Vagina (tissue), 2 donors: ENCODE measurements at regions of chr13 and their contacts with region 1.

Region 1: GRCh38 chr13:50081679-50082425 is 66.6 kb downstream of the KCNRG start:
- DNase-seq: peak; percentile 99
- H3K4me3 ChIP-seq: peak overlapping the region; percentile 45 to 58
- H3K27ac ChIP-seq: peak overlapping the region; percentile 87
- H3K4me1 ChIP-seq: peaks cover 44% of the 10 kb centered on the region
- H3K27me3 ChIP-seq: no peaks in the 10 kb centered on the region
- CTCF ChIP-seq: no peak
- POLR2A ChIP-seq: no peak

Region 2: DNA sequence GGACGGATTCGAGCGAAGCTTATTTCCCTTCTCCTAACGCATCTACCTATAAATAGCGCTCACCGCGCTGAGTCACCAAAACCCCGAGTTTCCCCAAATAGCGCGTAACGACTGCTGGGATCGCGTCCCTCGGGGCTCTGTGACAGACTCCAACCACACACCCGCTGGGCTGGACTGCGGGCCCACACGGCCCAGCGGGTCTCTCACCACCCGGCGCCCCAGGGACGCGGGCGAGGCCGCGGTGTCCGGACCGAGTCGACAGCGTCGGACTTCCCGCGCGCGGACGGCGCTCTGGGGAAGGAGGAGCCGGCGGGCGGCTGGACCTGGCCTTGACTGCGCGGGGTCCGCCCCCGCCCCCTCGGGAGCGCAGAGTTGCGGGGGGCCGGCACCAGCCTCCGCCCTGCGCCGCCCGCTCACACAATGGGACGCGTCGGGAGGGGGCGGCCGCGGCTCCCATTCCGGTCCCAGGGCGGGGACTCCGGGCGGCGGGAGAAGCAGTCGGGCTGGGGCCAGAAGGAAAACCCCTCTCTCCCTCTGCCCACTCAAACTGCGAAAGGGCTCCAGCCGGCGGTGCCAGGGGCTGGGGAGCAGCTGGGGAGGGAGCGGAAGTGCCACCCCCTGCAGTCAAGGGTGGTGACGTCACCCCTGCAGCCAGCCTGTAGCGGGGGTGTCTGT is 42.1 kb after region 1 on chr13:
- intact Hi-C with region 1: loop called (anchors 2 kb)
- DNase-seq: peak in 1 of 2 donors; percentile 98
- H3K4me3 ChIP-seq: peak overlapping the region; percentile 93 to 95
- H3K27ac ChIP-seq: peak overlapping the region; percentile 98
- H3K4me1 ChIP-seq: peaks cover 34% of the 10 kb centered on the region
- H3K27me3 ChIP-seq: no peaks in the 10 kb centered on the region
- CTCF ChIP-seq: no peak
- POLR2A ChIP-seq: peak; percentile 25 to 81

Region 3: GRCh38 chr13:50801087-50801931 is 719.5 kb after region 1 on chr13:
- intact Hi-C with region 1: loop called (anchors 10 kb)
- DNase-seq: no peak
- H3K4me3 ChIP-seq: no peak overlapping the region
- H3K27ac ChIP-seq: no peak overlapping the region
- H3K4me1 ChIP-seq: peaks cover 12% of the 10 kb centered on the region
- H3K27me3 ChIP-seq: no peaks in the 10 kb centered on the region
- CTCF ChIP-seq: peak; percentile 35 to 80 (median 62)
- POLR2A ChIP-seq: no peak

Region 4: DNA sequence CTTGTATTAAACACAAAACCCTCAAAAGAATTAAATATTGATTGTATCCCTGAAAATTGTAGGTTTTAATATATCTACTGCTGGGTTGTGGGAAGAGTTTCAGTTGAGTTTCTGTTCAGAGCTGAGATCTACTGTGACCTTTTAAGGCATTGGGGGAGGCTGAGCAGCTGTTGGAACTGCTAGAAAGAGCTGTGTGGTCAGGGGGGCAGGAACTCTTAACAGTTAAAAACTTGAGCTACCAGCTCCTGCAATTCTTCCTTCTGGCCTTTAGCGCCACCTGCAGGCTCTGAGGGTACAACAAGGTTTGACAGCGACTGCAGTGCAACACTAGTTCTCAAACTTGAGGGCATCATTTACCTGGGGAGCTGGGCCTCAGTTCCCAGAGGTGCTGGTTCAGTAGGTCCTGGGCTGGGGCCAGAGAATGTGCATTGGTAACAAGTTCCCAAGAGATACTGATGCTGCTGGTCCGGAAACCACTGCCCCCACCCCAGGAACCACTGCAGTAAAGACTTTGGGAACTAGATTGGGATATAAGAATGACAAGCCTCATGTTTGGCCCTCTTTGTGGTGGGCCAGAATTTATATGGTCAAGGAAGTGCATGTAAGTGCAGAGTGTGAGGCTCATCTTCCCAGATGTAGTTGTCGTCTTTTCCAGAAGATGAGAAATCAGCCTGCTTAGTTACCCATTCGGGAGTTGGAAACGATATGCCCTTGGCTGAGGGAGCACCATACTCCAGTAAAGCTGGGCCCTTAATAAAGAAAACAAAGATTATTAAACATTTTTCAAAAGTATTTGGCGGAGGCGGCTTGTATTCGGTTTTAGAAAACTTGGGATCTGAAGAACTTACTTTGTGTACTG is 830.3 kb after region 1 on chr13:
- intact Hi-C with region 1: loop called (anchors 5 kb)
- DNase-seq: no peak
- H3K4me3 ChIP-seq: no peak overlapping the region
- H3K27ac ChIP-seq: no peak overlapping the region
- H3K4me1 ChIP-seq: peaks cover 46% of the 10 kb centered on the region
- H3K27me3 ChIP-seq: no peaks in the 10 kb centered on the region
- CTCF ChIP-seq: peak; percentile 64 to 74 (median 71)
- POLR2A ChIP-seq: no peak